Transverse colon (tissue), 4 donors: ENCODE measurements at regions of chr12 and their contacts with region 1.

Region 1: GRCh38 chr12:77152623-77153193 is 87.3 kb upstream of the E2F7 start:
- DNase-seq: no peak
- H3K4me3 ChIP-seq: no peak overlapping the region
- H3K27ac ChIP-seq: no peak overlapping the region
- H3K4me1 ChIP-seq: no peaks in the 10 kb centered on the region
- H3K27me3 ChIP-seq: peaks cover 11% of the 10 kb centered on the region
- CTCF ChIP-seq: peak; percentile 27 to 49 (median 36)
- EP300 ChIP-seq: no peak
- POLR2A ChIP-seq: no peak

Region 2: GRCh38 chr12:77685112-77685511 is 532.4 kb after region 1 on chr12:
- in situ Hi-C with region 1: loop called in 3 of 4 experiments (anchors 10 to 25 kb)
- intact Hi-C with region 1: no loop called
- DNase-seq: peak; percentile 47
- H3K4me3 ChIP-seq: no peak overlapping the region
- H3K27ac ChIP-seq: no peak overlapping the region
- H3K4me1 ChIP-seq: no peaks in the 10 kb centered on the region
- H3K27me3 ChIP-seq: no peaks in the 10 kb centered on the region
- CTCF ChIP-seq: peak; percentile 19 to 50 (median 44)
- EP300 ChIP-seq: no peak
- POLR2A ChIP-seq: no peak